H1 (cell line): ENCODE measurements at regions of chr14 and their contacts with region 1.

Region 1: GRCh38 chr14:54366736-54367735 is 29.8 kb upstream of the CDKN3 start:
- DNase-seq: peak in 1 of 2 experiments; percentile 51
- H3K4me3 ChIP-seq: no peak overlapping the region
- H3K27ac ChIP-seq: no peak overlapping the region
- H3K4me1 ChIP-seq: peaks cover 16 to 25% (median 21%) of the 10 kb centered on the region in 4 experiments; a peak in 6 of 7 replicates
- H3K27me3 ChIP-seq: no peaks in the 10 kb centered on the region; a peak in 2 of 7 replicates
- CTCF ChIP-seq: peak; percentile 71 to 98 (median 93)
- EP300 ChIP-seq: no peak
- POLR2A ChIP-seq: peak in 1 of 2 experiments; percentile 63; a peak in 2 of 3 replicates
- RAD21 ChIP-seq: peak; percentile 85 to 90

Region 2: DNA sequence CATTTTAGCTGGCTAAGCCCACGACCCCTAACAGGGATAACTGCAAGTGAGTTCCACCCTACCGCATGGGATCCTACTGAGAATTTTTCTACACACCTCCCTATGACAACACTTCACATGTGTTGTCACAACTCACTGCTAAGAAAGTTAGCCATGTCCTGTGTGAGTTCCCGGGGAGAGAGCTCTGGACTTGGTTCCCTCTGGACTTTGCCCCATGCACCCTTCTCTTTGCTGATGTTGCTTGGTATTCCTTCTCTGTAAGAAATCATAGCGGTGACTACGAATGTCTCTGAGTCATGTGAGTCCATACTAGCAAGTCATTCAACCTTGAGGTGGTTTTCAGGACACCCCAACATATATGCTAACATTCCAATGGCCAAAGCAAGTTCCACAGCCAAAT is 20.3 kb after region 1 on chr14:
- CTCF ChIA-PET with region 1: interaction called, 26 read pairs
- POLR2A ChIA-PET with region 1: interaction called, 5 read pairs
- DNase-seq: no peak
- H3K4me3 ChIP-seq: no peak overlapping the region
- H3K27ac ChIP-seq: no peak overlapping the region
- H3K4me1 ChIP-seq: no peaks in the 10 kb centered on the region
- H3K27me3 ChIP-seq: no peaks in the 10 kb centered on the region; a peak in 1 of 7 replicates
- CTCF ChIP-seq: no peak
- EP300 ChIP-seq: no peak
- POLR2A ChIP-seq: no peak
- RAD21 ChIP-seq: no peak

Region 3: GRCh38 chr14:54396493-54397335 is 29.7 kb after region 1 on chr14 and contains the start of gene CDKN3:
- CTCF ChIA-PET with region 1: interaction called, 26 read pairs
- POLR2A ChIA-PET with region 1: interaction called, 25 read pairs
- DNase-seq: peak; percentile 94 to 97
- H3K4me3 ChIP-seq: peak within 1 kb of the TSS; percentile 64 to 84 (median 79)
- H3K27ac ChIP-seq: peak within 1 kb of the TSS; percentile 41; the same call in 1 of the 2 replicates
- H3K4me1 ChIP-seq: peaks cover 0 to 3% (median 1%) of the 10 kb centered on the region in 4 experiments; a peak in 2 of 7 replicates
- H3K27me3 ChIP-seq: peaks cover 0 to 7% (median 3%) of the 10 kb centered on the region in 4 experiments; a peak in 3 of 7 replicates
- CTCF ChIP-seq: peak; percentile 12 to 31 (median 24); a peak in 3 of 4 replicates
- EP300 ChIP-seq: no peak
- POLR2A ChIP-seq: peak; percentile 85 to 88
- RAD21 ChIP-seq: 0 out of 4 replicates have a peak, but pooled peaks of 1 of the 2 experiments have one; percentile 1
- total RNA-seq, gene CDKN3: 41.5 and 48.3 TPM in 2 replicates

Region 4: GRCh38 chr14:54420013-54420809 is 53.2 kb after region 1 on chr14:
- CTCF ChIA-PET with region 1: interaction called, 23 read pairs
- POLR2A ChIA-PET with region 1: interaction called, 8 read pairs
- DNase-seq: peak; percentile 17 to 59
- H3K4me3 ChIP-seq: no peak overlapping the region
- H3K27ac ChIP-seq: no peak overlapping the region
- H3K4me1 ChIP-seq: no peaks in the 10 kb centered on the region
- H3K27me3 ChIP-seq: no peaks in the 10 kb centered on the region
- CTCF ChIP-seq: peak in 2 of 3 experiments; percentile 67 to 71; a peak in 3 of 4 replicates
- EP300 ChIP-seq: no peak
- POLR2A ChIP-seq: no peak
- RAD21 ChIP-seq: peak; percentile 58 to 71